K562 (cell line): ENCODE measurements at regions of chr22 and their contacts with region 1.

Region 1: DNA sequence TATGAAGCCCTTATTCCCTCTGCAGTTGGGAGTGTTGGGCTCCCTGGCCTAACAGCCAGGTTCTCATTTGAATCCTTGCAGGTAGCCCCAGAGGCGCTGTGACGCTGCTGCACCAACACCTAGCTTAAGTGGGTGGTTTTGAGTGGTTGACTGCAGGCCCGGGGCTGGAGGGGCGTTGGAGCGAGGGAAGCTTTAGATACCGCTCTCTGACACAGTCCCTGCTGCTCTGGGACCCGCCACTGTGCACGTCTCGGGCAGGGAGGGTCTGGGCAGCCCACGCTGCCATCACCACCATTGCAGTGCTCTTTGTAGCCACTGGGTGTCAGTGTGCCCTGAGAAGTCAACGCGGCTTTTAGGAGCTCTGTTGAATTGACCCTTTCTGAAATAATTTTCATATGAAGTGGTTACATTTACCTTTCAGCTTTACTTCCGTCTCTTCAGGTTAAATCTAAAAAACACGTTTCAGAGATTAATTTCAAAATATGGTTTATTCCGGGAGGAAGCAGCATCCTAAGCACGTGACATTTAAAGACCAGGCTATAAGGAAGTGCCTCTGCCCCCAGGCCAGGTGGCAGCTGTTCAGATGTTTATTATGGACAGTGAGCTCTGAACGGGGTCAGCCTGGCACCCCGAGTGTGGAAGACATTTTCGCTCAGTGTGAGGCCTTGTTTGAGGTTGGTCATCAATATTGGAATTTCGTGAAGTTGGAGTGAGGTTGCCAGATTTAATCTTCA is 30.9 kb upstream of the PARVB start:
- DNase-seq: peak; percentile 56 to 59 (median 57)
- ATAC-seq: peak; percentile 88
- H3K4me3 ChIP-seq: no peak overlapping the region
- H3K27ac ChIP-seq: no peak overlapping the region
- H3K4me1 ChIP-seq: peaks cover 0 to 7% of the 10 kb centered on the region in 2 experiments; a peak in 1 of 5 replicates
- H3K27me3 ChIP-seq: no peaks in the 10 kb centered on the region
- CTCF ChIP-seq: peak; percentile 73 to 87 (median 85)
- EP300 ChIP-seq: no peak
- POLR2A ChIP-seq: no peak
- RAD21 ChIP-seq: peak; percentile 70 to 80

Region 2: DNA sequence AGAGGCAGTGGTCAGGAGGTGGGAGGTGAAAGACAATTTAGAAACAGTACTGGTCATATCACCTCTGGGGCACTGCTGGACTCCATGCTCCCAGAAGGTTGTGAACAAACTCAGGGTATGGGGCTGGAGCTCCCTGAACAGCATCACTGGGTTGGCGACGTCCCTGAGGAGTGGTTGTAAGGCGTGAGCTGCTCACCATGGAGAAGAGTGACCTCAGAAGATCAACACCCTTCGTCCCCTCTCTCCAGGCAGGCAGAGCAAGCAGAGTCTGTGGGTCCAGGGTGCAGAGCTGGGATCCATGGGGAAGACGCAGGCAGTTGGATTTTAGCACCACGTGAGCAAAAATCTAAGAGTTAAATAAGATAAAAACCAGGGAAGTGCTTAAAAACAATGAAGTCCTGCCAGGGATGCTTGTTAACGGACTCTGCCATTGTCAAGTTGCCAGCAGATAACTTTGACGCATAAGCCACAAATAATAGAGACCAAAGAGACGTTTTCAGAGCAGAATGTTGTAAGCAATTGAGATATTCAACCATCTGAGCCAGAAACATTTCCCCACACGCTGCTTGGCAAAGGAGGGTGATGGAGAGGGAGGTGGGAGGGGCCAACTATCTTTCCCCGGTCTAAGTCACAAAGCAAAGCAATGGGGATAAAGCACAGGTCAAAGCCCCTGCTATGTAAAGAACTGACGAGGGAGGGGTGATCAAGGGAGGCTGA is 115.0 kb before region 1 on chr22:
- CTCF ChIA-PET with region 1: no interaction called
- POLR2A ChIA-PET with region 1: no interaction called
- in situ Hi-C with region 1: no loop called
- intact Hi-C with region 1: no loop called
- DNase-seq: no peak
- ATAC-seq: no peak
- H3K4me3 ChIP-seq: no peak overlapping the region
- H3K27ac ChIP-seq: no peak overlapping the region
- H3K4me1 ChIP-seq: no peaks in the 10 kb centered on the region; a peak in 1 of 5 replicates
- H3K27me3 ChIP-seq: no peaks in the 10 kb centered on the region; a peak in 1 of 5 replicates
- CTCF ChIP-seq: no peak
- EP300 ChIP-seq: no peak
- POLR2A ChIP-seq: no peak
- RAD21 ChIP-seq: no peak

Region 3: DNA sequence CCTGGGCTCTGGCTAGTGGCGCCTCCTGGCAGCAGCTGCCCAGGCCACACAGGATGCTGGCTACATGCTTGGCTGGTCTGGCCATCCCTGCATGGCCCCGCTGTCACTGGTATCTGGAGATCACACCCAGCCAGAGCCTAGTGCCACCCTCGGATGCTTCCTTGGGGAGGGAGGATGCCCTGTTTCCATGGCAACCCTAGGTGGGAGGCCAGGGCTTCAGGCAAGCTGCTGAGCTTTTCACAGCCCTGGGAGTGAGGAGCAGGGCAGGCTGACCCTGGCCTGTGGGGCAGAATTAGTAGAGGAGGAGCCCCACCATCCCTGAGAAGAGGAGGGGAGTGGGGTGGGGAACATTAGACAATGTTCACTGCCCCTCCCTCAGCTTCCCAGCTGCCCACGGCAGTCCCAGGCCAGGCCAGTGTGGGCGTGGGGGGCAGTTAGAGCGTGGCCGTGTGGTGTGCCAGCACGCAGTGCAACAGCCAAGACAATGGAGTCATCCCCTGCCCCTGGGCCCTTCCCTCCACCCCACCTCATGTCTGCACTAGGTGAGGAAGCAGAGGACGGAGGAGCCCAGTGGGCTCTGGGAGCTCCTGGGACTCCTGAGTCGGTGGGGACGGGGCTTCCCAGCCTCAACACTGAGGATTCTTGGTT is 81.3 kb after region 1 on chr22:
- CTCF ChIA-PET with region 1: no interaction called
- POLR2A ChIA-PET with region 1: no interaction called
- in situ Hi-C with region 1: loop called (anchors 5 kb)
- intact Hi-C with region 1: no loop called
- DNase-seq: no peak
- ATAC-seq: no peak
- H3K4me3 ChIP-seq: no peak overlapping the region
- H3K27ac ChIP-seq: no peak overlapping the region
- H3K4me1 ChIP-seq: peaks cover 0 to 12% of the 10 kb centered on the region in 2 experiments; a peak in 3 of 5 replicates
- H3K27me3 ChIP-seq: no peaks in the 10 kb centered on the region
- CTCF ChIP-seq: no peak
- EP300 ChIP-seq: no peak
- POLR2A ChIP-seq: no peak
- RAD21 ChIP-seq: no peak

Region 4: DNA sequence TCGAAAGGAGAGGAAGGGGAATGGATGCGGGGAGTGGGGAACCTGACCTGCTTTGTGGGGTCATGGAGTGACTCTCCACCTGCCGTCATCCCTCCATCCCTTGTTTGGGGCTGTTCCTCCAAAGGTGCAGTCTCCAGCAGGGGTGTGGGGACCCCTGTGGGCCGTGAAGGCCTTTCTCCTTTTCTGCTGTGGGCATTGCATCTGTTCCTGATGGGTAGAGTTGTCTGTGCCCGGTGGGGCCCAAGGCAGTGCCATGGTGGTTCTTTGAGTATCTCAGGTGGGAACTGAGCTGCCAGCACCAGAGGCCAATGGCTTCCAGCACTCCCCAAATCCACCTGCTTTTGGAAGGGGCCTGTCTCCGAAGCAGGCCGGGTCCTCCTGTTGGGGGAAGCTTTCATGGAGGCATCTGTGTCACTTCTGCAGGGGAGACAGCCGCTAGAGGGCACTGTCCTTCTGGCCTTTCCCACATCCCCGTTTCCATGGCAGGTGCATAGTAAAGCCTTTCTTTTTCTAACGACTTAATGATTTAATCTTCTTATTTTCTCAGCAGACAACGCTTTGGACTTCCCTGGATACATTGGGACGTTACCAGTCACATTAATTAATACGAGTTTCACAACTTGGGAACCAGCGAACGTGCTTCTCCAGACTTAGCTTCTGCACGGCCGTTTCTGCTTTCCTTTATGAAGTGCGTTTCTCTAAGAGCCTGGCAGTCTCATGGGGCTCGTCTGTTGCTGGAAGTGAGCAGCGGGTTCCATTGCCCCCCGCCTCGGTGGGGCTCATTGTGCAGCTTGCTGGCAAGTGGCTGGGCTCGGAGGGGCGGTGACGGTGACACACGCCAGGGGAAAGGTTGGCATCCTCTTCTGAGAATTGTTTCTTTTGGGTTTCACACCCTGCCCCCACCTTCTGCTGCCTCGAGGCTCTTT is 88.0 kb after region 1 on chr22:
- CTCF ChIA-PET with region 1: interaction called, 20 read pairs
- POLR2A ChIA-PET with region 1: interaction called, 8 read pairs
- in situ Hi-C with region 1: loop called (anchors 5 kb)
- intact Hi-C with region 1: loop called (anchors 1 kb)
- DNase-seq: peak; percentile 66 to 72 (median 67)
- ATAC-seq: peak; percentile 82
- H3K4me3 ChIP-seq: no peak overlapping the region
- H3K27ac ChIP-seq: no peak overlapping the region
- H3K4me1 ChIP-seq: peaks cover 0 to 7% of the 10 kb centered on the region in 2 experiments; a peak in 1 of 5 replicates
- H3K27me3 ChIP-seq: no peaks in the 10 kb centered on the region
- CTCF ChIP-seq: peak; percentile 58 to 80 (median 61)
- EP300 ChIP-seq: no peak
- POLR2A ChIP-seq: no peak
- RAD21 ChIP-seq: peak in 1 of 2 experiments; percentile 48; a peak in 3 of 4 replicates

Region 5: GRCh38 chr22:44133901-44134571 is 140.8 kb after region 1 on chr22:
- CTCF ChIA-PET with region 1: no interaction called
- POLR2A ChIA-PET with region 1: no interaction called
- in situ Hi-C with region 1: no loop called
- intact Hi-C with region 1: no loop called
- DNase-seq: no peak
- ATAC-seq: no peak
- H3K4me3 ChIP-seq: no peak overlapping the region
- H3K27ac ChIP-seq: no peak overlapping the region
- H3K4me1 ChIP-seq: peaks cover 0 to 5% of the 10 kb centered on the region in 2 experiments; a peak in 4 of 5 replicates
- H3K27me3 ChIP-seq: no peaks in the 10 kb centered on the region
- CTCF ChIP-seq: no peak
- EP300 ChIP-seq: no peak
- POLR2A ChIP-seq: no peak
- RAD21 ChIP-seq: no peak

Region 6: DNA sequence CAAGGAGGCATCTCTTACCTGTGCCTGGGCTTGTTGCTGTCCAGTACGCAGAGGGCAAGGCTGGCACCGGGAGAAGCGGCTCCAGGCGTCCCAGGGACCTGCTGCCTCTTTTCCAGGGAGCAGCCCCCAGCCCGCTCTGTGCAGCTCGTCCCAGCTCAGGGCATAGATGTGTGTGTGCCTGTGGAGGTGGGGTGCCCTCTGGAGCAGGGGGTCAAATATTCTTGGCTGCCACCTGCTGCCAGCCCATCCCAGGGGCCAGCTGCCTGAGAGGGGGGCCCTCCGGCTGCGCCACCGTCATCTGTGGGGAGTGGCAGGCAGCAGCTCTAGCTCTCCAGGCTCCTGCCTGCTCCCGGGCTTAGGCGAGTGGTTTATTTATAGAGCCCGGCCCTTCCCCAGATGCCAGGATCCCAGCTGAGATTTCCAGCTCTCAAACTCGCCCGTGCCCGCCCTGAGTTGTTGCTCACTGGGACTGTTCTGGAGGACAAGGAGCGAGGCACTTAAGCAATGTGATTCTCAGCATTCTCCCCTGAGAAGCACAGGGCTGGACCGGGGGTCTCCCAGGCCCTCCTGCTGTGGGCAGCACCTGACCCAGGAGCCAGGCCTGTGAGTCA is 417.4 kb after region 1 on chr22:
- CTCF ChIA-PET with region 1: no interaction called
- POLR2A ChIA-PET with region 1: no interaction called
- in situ Hi-C with region 1: no loop called
- intact Hi-C with region 1: no loop called
- DNase-seq: no peak
- ATAC-seq: no peak
- H3K4me3 ChIP-seq: no peak overlapping the region
- H3K27ac ChIP-seq: no peak overlapping the region
- H3K4me1 ChIP-seq: no peaks in the 10 kb centered on the region
- H3K27me3 ChIP-seq: peaks cover 4 to 47% of the 10 kb centered on the region in 2 experiments; a peak in 4 of 5 replicates
- CTCF ChIP-seq: no peak
- EP300 ChIP-seq: no peak
- POLR2A ChIP-seq: no peak
- RAD21 ChIP-seq: no peak